ENCODE measurements at regions of chr7 and their contacts with region 1.

Region 1: DNA sequence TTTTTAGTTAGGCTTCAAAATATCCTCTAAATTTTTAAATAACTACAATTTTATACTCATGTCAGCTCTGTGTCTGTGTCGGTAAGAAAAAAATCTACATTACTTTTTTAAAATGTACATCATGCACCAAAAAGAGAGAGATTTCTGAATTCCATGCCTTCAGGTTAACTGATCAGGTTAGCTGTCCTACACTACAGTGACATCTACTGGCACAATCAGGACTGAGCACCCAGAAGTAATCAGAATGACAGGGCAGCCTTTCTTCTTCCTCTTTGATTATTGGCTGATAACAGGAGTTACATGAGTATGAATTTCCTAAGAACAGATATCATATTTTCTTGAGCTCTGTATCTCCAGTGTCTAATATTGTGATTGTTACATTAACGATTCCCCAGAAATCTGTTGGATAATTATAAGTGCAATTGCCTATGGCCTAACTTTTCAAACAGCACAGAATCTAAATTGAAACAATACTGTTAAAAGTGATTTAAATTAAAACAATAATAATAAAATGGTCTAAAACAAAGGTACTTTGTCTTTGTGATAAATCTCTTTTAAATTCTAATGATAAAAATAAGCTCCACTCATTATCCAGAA is 41.8 kb upstream of the HYCC1 start:
- DNase-seq: peak in 4 of 10 donors; percentile 19 to 60 (median 30)
- H3K4me3 ChIP-seq: no peak overlapping the region
- H3K27ac ChIP-seq: no peak overlapping the region
- H3K27me3 ChIP-seq: peaks cover 0 to 3% (median 0%) of the 10 kb centered on the region in 45 donors
- CTCF ChIP-seq: peak; percentile 72 to 98 (median 89)

Region 2: DNA sequence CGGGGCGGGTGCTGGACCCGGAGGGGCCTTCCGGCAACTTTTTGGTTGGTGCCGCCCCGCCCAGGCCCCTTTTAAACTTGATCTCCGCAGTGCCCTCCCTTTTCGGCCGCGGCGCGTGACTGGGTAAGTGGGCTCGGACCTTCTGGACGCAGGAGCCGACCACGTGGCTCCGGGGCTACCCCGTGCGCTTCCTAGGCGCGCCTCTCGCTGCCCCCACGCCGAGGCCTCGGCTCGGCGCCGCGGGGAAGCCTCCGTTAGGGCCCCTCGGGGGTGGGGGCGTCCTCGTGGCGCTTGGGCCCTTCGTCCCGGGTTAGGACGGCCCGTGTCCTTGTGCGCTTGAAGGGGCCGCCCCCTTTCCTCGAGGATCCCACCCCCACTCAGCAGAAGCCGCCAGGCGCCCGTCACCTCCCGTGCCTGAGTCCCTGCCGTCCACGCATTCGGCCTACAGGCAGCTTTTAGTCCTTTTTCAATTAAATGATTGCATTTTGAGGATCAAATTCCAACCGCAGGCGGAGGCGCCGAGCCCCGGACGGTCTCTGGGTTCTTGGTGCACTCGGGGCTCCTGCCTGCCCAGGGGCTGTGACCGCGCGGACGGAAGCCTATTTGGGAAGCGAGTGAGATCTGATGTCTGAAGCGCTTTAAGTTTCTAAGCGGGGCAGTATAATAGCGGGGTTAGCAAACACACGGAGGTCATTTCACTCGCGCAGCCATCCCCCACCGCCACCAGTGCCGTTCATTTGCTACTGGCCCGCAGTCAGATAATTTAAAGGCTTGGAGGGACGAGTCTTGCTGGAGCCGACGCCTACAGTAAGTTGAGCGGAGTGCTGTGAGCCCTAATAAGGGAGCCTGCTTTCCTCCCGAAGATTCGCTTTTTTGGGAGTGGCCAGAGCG is 201.3 kb before region 1 on chr7:
- intact Hi-C with region 1: loop called in 1 of 2 experiments (anchors 10 kb)
- DNase-seq: peak in 7 of 10 donors; percentile 28 to 61 (median 49)
- H3K4me3 ChIP-seq: peak overlapping the region; percentile 36 to 91 (median 74)
- H3K27ac ChIP-seq: peak overlapping the region in 45 of 59 donors; percentile 7 to 88 (median 65)
- H3K27me3 ChIP-seq: peaks cover 0 to 11% (median 0%) of the 10 kb centered on the region in 45 donors
- CTCF ChIP-seq: peak; percentile 23 to 91 (median 69)

Region 3: DNA sequence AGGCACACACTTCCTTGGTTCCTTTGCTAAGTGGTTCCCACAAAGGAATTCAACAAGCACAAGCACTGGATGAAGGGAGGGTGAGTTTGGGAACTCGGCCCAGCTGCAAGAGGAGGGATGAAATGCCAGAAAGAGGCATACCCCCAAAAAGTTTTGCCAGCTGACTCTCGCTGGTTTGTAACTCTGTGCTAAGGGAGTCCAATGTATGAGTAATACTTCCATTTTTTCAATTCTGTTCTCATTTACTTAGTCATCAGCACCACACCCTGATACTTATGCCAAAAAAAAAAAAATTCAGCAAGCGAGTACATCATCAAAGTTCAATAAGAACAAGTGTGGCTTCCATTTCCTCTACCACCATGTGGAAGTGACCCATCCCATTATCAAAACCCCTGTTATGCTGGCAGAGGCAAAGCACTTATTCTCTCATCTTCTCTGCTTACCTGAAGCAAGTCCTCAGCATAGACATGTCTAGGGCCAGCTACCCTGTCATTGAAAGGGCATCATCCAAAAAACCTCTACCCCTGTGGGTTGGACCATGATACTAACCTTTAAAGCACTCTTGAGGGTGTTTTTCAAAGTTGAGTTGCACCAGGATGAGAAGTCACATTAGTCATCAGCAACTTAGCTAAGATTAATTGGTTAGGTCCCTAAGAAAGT is 34.8 kb before region 1 on chr7:
- intact Hi-C with region 1: loop called in 1 of 2 experiments (anchors 5 kb)
- DNase-seq: no peak
- H3K4me3 ChIP-seq: no peak overlapping the region
- H3K27ac ChIP-seq: no peak overlapping the region
- H3K27me3 ChIP-seq: peaks cover 0 to 2% (median 0%) of the 10 kb centered on the region in 45 donors
- CTCF ChIP-seq: no peak